PC-3 (cell line): ENCODE measurements at regions of chr18 and their contacts with region 1.

Region 1: GRCh38 chr18:69916412-69916811 is 31.3 kb downstream of the CD226 start:
- DNase-seq: peak; percentile 79
- ATAC-seq: peak; percentile 92
- H3K4me3 ChIP-seq: no peak overlapping the region
- H3K27ac ChIP-seq: peak overlapping the region; percentile 28
- H3K4me1 ChIP-seq: peaks cover 18% of the 10 kb centered on the region
- H3K27me3 ChIP-seq: no peaks in the 10 kb centered on the region
- CTCF ChIP-seq: peak; percentile 52; the same call in 1 of the 2 replicates

Region 2: GRCh38 chr18:69787825-69788547 is 128.4 kb before region 1 on chr18:
- CTCF ChIA-PET with region 1: no interaction called
- POLR2A ChIA-PET with region 1: no interaction called
- intact Hi-C with region 1: loop called (anchors 10 kb)
- DNase-seq: peak; percentile 75
- ATAC-seq: peak; percentile 88
- H3K4me3 ChIP-seq: no peak overlapping the region
- H3K27ac ChIP-seq: peak overlapping the region; percentile 66
- H3K4me1 ChIP-seq: peaks cover 28% of the 10 kb centered on the region
- H3K27me3 ChIP-seq: no peaks in the 10 kb centered on the region
- CTCF ChIP-seq: no peak

Region 3: DNA sequence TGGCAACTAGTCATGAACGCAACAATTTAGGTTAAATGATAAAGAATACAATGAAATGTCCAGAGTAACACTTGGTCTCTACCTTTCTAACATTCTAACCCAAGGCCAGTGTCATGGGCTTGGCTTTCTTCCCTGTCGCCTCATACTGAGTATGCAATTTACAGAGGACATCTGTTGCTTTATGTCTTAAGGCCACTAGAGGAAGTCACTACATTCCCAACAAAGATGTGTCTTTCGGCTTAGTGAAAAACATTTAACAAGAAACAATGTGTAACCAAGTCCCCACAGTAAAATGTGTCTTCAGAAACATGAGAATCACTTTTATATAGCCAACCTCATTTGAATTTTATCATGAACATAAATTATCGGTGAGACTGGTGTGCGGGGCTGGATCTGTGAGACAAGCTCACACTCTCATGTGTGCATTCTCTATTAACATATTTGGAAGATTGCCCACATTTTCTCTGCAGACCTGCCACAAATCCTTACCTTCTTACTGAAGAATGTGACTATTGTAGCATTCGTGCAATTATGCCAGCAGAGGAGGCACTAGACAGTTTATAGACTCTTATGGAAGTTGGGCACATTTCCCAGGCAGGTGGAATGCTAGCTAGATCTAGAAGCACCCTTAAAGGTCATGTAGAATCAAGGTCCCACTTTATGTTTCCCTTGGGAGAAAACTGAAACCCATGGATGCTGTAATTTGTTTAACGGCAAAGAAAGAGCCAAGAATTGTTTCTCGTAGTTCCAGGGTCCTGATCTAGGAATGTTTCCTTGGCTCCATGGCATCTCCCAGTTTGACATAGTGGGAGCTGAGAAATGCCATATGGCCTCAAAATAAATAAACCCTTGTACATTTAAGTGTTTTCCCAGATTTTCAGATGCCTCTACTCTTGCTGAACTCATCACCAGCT is 70.6 kb before region 1 on chr18:
- CTCF ChIA-PET with region 1: no interaction called
- POLR2A ChIA-PET with region 1: no interaction called
- intact Hi-C with region 1: no loop called
- DNase-seq: no peak
- ATAC-seq: no peak; the same call in 1 of the 2 replicates
- H3K4me3 ChIP-seq: no peak overlapping the region
- H3K27ac ChIP-seq: no peak overlapping the region
- H3K4me1 ChIP-seq: no peaks in the 10 kb centered on the region
- H3K27me3 ChIP-seq: no peaks in the 10 kb centered on the region
- CTCF ChIP-seq: peak; percentile 29; the same call in 1 of the 2 replicates

Region 4: DNA sequence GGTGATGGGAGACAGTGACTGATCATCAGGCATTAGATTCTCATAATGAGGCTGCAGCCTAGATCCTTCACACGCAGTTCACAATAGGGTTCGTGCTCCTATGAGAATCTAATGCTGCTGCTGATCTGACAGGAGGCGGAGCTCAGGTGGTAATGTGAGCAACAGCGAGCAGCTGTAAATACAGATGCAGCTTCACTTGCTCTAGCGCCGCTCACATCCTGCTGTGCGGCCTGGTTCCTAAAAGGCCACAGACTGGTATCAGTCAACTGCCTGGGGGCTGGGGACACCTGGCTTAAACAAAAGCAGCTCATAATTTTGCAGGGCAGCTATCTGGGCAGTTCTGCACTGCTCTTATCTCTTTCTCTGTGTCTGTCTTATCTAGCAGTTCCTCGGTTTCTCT is 51.6 kb after region 1 on chr18:
- CTCF ChIA-PET with region 1: no interaction called
- POLR2A ChIA-PET with region 1: no interaction called
- intact Hi-C with region 1: no loop called
- DNase-seq: no peak
- ATAC-seq: no peak
- H3K4me3 ChIP-seq: no peak overlapping the region
- H3K27ac ChIP-seq: no peak overlapping the region
- H3K4me1 ChIP-seq: no peaks in the 10 kb centered on the region
- H3K27me3 ChIP-seq: no peaks in the 10 kb centered on the region
- CTCF ChIP-seq: no peak

Region 5: DNA sequence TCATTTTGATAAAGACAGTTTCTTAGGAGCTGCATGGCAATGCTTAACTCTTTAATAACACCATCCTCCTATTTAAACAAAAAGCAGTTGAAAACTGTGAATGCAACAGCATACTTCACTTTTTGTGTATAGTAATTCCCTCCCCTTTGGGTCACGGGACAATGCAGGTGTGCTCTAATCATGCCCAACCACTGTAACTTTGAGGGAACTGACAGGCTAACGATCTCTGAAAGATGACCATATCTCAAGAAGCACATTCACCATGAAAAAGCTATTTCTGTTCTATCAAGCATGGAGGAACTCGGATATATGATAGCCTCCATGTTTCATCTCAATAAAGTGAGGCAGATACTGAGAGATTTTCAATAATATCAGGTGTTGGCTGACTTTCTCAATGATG is 112.3 kb after region 1 on chr18:
- CTCF ChIA-PET with region 1: no interaction called
- POLR2A ChIA-PET with region 1: no interaction called
- intact Hi-C with region 1: no loop called
- DNase-seq: no peak
- ATAC-seq: no peak
- H3K4me3 ChIP-seq: no peak overlapping the region
- H3K27ac ChIP-seq: no peak overlapping the region
- H3K4me1 ChIP-seq: no peaks in the 10 kb centered on the region
- H3K27me3 ChIP-seq: no peaks in the 10 kb centered on the region
- CTCF ChIP-seq: no peak

Region 6: GRCh38 chr18:70044632-70045031 is 128.2 kb after region 1 on chr18:
- CTCF ChIA-PET with region 1: no interaction called
- POLR2A ChIA-PET with region 1: no interaction called
- intact Hi-C with region 1: loop called (anchors 2 kb)
- DNase-seq: peak; percentile 93
- ATAC-seq: peak; percentile 96
- H3K4me3 ChIP-seq: no peak overlapping the region
- H3K27ac ChIP-seq: peak overlapping the region; percentile 71
- H3K4me1 ChIP-seq: peaks cover 25% of the 10 kb centered on the region
- H3K27me3 ChIP-seq: no peaks in the 10 kb centered on the region
- CTCF ChIP-seq: no peak